Activated CD8-positive, alpha-beta T cell treated with anti-CD3 and anti-CD28 coated beads for 36 hours (primary cell): ENCODE measurements at regions of chr14 and their contacts with region 1.

Region 1: GRCh38 chr14:105974902-105975301 is 448.5 kb downstream of the TMEM121 start:
- DNase-seq: peak; percentile 95
- ATAC-seq: peak; percentile 99
- H3K4me3 Mint-ChIP-seq: no peak overlapping the region
- H3K27ac Mint-ChIP-seq: no peak overlapping the region
- H3K4me1 Mint-ChIP-seq: peaks cover 7% of the 10 kb centered on the region
- H3K27me3 Mint-ChIP-seq: peaks cover 4% of the 10 kb centered on the region
- CTCF ChIP-seq: peak; percentile 88

Region 2: GRCh38 chr14:105989566-105990302 is 14.8 kb after region 1 on chr14:
- CTCF ChIA-PET with region 1: interaction called, 26 read pairs
- POLR2A ChIA-PET with region 1: no interaction called
- intact Hi-C with region 1: no loop called
- DNase-seq: peak; percentile 86
- ATAC-seq: peak; percentile 75
- H3K4me3 Mint-ChIP-seq: no peak overlapping the region
- H3K27ac Mint-ChIP-seq: peak overlapping the region; percentile 78
- H3K4me1 Mint-ChIP-seq: peaks cover 76% of the 10 kb centered on the region
- H3K27me3 Mint-ChIP-seq: no peaks in the 10 kb centered on the region
- CTCF ChIP-seq: no peak